Heart right ventricle (tissue), 16 donors: ENCODE measurements at regions of chr6 and their contacts with region 1.

Region 1: DNA sequence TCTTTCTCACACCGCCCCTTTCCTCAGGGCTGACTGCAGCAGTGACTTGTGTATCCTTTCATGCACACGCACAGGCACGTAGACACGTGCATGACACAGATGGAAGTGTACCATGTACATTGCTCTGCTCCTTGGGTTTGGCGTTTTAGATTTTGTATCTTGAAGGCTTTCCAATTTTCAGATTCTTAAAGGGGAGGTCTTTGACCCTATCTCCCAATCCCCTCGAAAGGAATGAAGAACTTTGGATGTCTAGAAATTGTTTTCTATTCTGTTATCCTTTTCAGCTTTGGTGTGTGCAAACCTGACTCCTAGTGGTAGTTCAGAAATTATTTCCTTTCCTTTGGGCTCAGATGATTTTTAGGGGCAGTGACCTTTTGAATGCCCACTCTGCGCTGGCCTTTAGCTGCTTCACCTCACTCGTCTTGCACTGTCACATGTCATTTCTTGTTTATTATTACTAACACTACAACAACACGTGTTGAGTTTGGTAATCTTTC is 63.0 kb downstream of the HIVEP1 start:
- DNase-seq: no peak
- ATAC-seq: no peak
- H3K4me3 ChIP-seq: no peak overlapping the region
- H3K27ac ChIP-seq: no peak overlapping the region
- H3K4me1 ChIP-seq: peaks cover 0 to 11% (median 4%) of the 10 kb centered on the region in 9 donors
- H3K27me3 ChIP-seq: no peaks in the 10 kb centered on the region
- CTCF ChIP-seq: peak in 7 of 9 donors; percentile 27 to 60 (median 46)

Region 2: GRCh38 chr6:11595903-11596302 is 479.2 kb before region 1 on chr6:
- intact Hi-C with region 1: loop called in 1 of 10 experiments (anchors 10 kb)
- DNase-seq: no peak
- ATAC-seq: no peak
- H3K4me3 ChIP-seq: no peak overlapping the region
- H3K27ac ChIP-seq: no peak overlapping the region
- H3K4me1 ChIP-seq: peaks cover 0 to 11% (median 0%) of the 10 kb centered on the region in 9 donors
- H3K27me3 ChIP-seq: no peaks in the 10 kb centered on the region
- CTCF ChIP-seq: no peak

Region 3: DNA sequence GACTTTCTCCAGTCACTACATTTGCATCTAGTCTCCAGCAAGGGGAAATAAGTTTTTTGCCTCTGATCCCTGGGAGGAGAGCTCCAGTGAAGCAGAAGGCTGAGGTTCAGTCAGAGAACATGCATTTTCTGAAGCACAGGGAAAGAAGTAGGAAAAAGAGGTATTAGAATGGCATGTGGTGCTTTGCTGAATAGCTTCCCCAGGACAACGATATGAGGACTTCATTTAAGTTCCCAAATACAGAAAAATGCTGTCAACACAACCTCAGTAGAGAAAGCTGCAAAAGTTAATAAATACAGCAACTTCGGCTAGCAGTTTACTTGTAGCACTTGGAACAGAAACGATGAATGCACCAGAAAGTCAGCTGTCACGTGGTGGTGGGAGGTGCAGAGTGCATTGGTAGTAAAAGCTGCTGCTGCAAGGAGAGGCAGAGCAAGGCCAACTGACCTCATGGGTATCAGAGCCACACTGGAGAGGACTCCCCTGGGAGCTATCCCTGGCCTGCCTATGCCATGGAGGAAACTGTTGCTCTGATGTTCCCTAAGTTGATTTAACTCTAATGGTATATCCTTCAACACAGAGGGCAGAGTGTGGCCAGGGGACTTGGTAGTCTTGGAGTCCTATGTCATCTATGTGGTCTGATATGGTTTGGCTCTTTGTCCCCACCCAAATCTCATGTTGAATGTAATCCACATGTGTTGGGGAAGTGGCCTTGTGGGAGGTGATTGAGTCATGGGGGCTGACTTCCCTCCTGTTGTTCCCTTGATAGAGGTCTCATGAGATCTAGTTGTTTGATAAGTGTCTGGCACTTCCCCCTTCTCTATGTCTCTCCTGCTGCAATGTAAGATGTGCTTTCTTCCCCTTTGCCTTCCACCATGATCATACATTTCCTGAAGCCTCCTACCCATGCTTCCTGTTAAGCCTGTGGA is 382.4 kb before region 1 on chr6:
- intact Hi-C with region 1: loop called in 1 of 10 experiments (anchors 10 kb)
- DNase-seq: no peak
- ATAC-seq: no peak
- H3K4me3 ChIP-seq: no peak overlapping the region
- H3K27ac ChIP-seq: no peak overlapping the region
- H3K4me1 ChIP-seq: peaks cover 0 to under 1% (median 0%) of the 10 kb centered on the region in 9 donors
- H3K27me3 ChIP-seq: no peaks in the 10 kb centered on the region
- CTCF ChIP-seq: no peak

Region 4: GRCh38 chr6:11700118-11700718 is 374.9 kb before region 1 on chr6:
- intact Hi-C with region 1: loop called in 2 of 10 experiments (anchors 10 kb)
- DNase-seq: no peak
- ATAC-seq: no peak
- H3K4me3 ChIP-seq: no peak overlapping the region
- H3K27ac ChIP-seq: no peak overlapping the region
- H3K4me1 ChIP-seq: peaks cover 0 to 9% (median 0%) of the 10 kb centered on the region in 9 donors
- H3K27me3 ChIP-seq: no peaks in the 10 kb centered on the region
- CTCF ChIP-seq: peak; percentile 33 to 69 (median 51)